H1 (cell line): ENCODE measurements at regions of chr9 and their contacts with region 1.

Region 1: GRCh38 chr9:982394-983230 is 6.2 kb downstream of the DMRT3 start:
- DNase-seq: no peak
- H3K4me3 ChIP-seq: no peak overlapping the region
- H3K27ac ChIP-seq: no peak overlapping the region
- H3K4me1 ChIP-seq: peaks cover under 1 to 9% (median 4%) of the 10 kb centered on the region in 4 experiments; a peak in 4 of 7 replicates
- H3K27me3 ChIP-seq: peaks cover 35 to 63% (median 55%) of the 10 kb centered on the region in 4 experiments
- CTCF ChIP-seq: no peak
- EP300 ChIP-seq: no peak
- POLR2A ChIP-seq: no peak
- RAD21 ChIP-seq: no peak

Region 2: GRCh38 chr9:818958-819357 is 163.7 kb before region 1 on chr9:
- CTCF ChIA-PET with region 1: no interaction called
- POLR2A ChIA-PET with region 1: no interaction called
- DNase-seq: no peak
- H3K4me3 ChIP-seq: no peak overlapping the region
- H3K27ac ChIP-seq: no peak overlapping the region
- H3K4me1 ChIP-seq: no peaks in the 10 kb centered on the region
- H3K27me3 ChIP-seq: no peaks in the 10 kb centered on the region
- CTCF ChIP-seq: no peak
- EP300 ChIP-seq: no peak
- POLR2A ChIP-seq: no peak
- RAD21 ChIP-seq: no peak

Region 3: DNA sequence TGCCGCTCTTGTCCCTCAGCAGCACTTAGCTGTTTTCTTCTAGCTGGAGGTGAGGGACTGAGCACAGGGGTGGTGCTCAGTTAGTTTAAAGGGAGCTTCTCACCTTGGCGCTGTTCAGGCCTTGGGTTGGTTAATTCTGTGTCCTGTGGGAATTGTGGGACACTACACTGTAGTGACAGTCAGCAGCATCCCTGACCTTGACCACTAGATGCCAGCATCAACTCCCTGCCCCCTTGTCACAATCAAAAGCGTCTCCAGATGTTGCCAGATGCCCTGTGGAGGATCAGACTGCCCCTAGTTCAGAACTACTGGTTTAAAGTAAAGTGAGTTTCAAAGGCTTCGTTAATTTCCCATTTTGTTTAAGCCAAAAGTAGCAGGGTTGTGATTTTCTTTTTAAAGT is 71.6 kb before region 1 on chr9:
- CTCF ChIA-PET with region 1: interaction called, 12 read pairs
- POLR2A ChIA-PET with region 1: no interaction called
- DNase-seq: peak in 1 of 2 experiments; percentile 19
- H3K4me3 ChIP-seq: no peak overlapping the region
- H3K27ac ChIP-seq: no peak overlapping the region
- H3K4me1 ChIP-seq: peaks cover 0 to 11% (median 2%) of the 10 kb centered on the region in 4 experiments; a peak in 3 of 7 replicates
- H3K27me3 ChIP-seq: no peaks in the 10 kb centered on the region; a peak in 1 of 7 replicates
- CTCF ChIP-seq: peak; percentile 59 to 70 (median 68)
- EP300 ChIP-seq: no peak
- POLR2A ChIP-seq: no peak
- RAD21 ChIP-seq: peak; percentile 49 to 68